Activated T-helper 1 cell treated with anti-CD3 and anti-CD28 coated beads, Interleukin-12 subunit alpha, Interleukin-12 subunit beta, Interleukin-2, Interleukin-4 antibody, amounts not matched to agents 30 ng/mL and 10 ng/mL and 1 ng/mL, durations not matched to agents 14 hours and 24 hours and 36 hours (primary cell): ENCODE measurements at regions of chr16 and their contacts with region 1.

Region 1: DNA sequence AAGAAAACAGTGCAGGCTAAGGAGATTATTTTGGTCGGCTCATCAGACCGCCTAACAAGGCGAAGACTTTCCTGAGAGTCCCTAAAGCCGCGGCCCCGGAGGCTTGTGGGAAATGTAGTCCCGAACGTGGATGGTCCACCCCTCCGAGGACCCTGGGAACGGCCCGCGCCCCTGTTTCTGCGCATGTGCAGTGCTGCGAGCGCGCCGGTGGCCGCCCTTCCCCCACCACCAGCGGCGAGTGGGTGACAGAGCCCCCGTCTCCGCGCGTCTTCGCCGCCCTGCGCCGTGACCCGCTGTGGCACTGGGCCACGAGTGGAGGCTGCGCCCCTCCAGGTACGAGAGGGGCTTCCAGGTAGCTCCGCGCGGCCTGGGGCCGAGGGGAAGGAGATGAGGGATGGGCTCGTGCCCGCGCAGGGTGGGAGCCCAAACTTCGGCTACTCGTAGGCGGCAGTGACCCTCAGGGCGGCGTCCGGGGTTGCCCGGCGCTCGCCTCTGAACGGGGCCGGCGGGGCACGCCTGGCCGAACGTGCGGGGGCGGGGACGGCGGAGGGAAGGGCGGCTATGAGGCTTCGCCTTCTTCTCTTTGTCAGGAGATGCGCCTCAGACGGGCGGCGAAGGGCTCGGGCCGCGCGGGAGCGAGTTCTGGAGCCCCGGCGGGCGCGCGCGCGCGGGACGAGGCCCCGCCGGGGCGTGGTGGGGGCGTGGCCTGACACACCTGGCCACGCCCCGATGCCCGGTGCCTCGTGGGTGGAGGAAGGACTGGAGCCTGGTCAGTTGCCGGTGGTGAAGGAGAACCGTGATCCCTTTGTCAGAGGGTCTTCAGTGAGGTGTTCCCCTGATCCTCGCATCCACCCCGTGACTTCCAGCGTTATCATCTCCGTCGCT is at the start of gene ZFP1:
- DNase-seq: peak; percentile 90
- H3K4me3 Mint-ChIP-seq: peak within 1 kb of the TSS; percentile 90
- H3K27ac Mint-ChIP-seq: peak within 1 kb of the TSS; percentile 84
- H3K4me1 Mint-ChIP-seq: peaks cover 29% of the 10 kb centered on the region
- H3K27me3 Mint-ChIP-seq: no peaks in the 10 kb centered on the region
- total RNA-seq, gene ZFP1: 12.3 and 14.6 TPM in 2 replicates

Region 2: GRCh38 chr16:74695450-74696422 is 452.8 kb before region 1 on chr16:
- intact Hi-C with region 1: loop called (anchors 1 kb)
- DNase-seq: peak; percentile 66
- H3K4me3 Mint-ChIP-seq: peak overlapping the region; percentile 84
- H3K27ac Mint-ChIP-seq: peak overlapping the region; percentile 70
- H3K4me1 Mint-ChIP-seq: peaks cover 50% of the 10 kb centered on the region
- H3K27me3 Mint-ChIP-seq: no peaks in the 10 kb centered on the region

Region 3: DNA sequence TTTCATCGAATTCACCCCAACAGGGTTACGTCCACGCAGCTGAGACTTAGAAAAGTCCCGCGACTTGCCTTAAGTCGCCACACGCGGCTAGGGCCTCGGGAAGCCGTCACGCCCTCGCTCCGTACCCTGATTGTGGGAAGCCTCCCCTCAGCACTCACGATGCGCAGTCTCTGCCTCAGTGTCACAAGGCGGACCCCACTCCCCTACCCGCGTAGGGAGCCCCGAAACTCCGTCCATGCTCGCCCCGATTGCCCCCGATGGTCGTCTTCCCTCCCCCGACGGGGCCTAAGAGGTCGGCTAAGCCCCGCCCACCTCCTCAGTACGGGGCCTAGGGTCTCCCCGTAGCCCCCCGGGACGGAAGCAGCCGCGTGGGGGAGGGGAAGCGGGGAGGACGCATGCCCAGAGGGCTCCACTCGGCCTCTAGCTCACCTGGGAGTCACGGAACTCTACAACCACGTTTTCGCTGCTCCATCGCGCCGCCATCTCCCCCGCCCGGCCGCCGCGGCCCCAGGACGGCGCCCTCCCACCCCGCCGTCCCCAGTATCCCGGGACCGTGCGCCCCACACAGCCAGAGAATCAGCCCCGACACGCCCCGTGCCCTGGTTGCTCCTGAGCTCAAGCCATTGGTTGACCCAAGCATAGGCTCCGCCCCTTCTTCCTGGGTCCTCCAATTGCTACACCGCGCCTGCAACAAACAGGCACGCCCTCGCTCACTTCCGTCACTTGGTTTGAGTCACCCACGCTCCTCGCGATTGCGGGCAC is 163.8 kb before region 1 on chr16 and contains the start of gene WDR59:
- intact Hi-C with region 1: loop called (anchors 1 kb)
- DNase-seq: peak; percentile 99
- H3K4me3 Mint-ChIP-seq: peak within 1 kb of the TSS; percentile 90
- H3K27ac Mint-ChIP-seq: peak within 1 kb of the TSS; percentile 90
- H3K4me1 Mint-ChIP-seq: peaks cover 14% of the 10 kb centered on the region
- H3K27me3 Mint-ChIP-seq: peaks cover 3% of the 10 kb centered on the region
- total RNA-seq, gene WDR59: 85.9 and 95.3 TPM in 2 replicates